ENCODE measurements at regions of chr1 and their contacts with region 1.

Region 1: GRCh38 chr1:31548907-31549808 is 27.2 kb upstream of the TINAGL1 start:
- DNase-seq: peak; percentile 71
- H3K4me3 ChIP-seq: peak overlapping the region; percentile 21
- CTCF ChIP-seq: peak; percentile 90

Region 2: GRCh38 chr1:31196685-31197084 is 352.5 kb before region 1 on chr1:
- in situ Hi-C with region 1: loop called (anchors 10 kb)
- DNase-seq: no peak
- H3K4me3 ChIP-seq: no peak overlapping the region
- CTCF ChIP-seq: no peak

Region 3: DNA sequence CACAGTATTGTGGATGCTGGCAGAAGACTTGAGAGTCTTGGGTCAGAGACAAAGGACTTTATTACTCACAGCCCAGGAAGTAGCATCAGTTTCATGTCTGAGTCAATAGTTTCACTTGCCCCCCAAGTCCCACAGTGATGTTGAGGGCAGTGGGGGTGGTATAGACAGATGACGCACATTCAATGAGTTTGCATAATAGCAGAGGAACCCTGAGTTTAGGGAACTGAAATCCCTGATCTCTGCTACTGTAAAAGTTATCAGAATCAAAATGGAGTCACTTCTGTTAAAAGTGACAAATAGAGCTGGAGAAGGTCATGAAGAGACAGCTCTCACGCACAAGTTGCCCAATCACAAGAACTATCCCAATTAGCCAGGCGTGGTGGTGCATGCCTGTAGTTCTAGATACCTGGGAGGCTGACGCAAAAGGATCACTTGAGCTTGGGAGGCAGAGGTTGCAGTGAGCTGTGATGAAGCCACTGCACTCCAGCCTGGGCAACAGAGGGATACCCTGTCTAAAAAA is 56.8 kb after region 1 on chr1:
- in situ Hi-C with region 1: no loop called
- DNase-seq: no peak
- H3K4me3 ChIP-seq: no peak overlapping the region
- CTCF ChIP-seq: no peak

Region 4: DNA sequence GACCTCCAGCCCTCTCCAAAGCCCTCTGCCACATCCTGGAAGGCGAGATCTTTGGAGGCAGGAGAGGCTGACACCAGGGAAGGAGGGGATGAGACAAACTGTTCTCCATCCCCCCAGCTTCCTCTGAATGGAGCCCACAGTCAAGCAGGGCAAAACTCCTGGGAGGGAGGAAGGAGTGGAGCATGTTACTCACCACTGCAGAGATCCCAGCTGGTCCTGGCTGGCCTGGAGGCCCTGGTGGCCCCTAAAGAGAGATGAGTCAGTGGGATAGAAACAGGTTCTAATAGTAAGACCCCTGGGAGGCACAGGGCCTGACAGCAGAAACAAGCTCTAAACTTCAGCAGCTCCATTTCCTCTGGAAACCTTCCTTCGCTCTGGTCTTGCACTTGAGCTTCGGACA is 109.6 kb after region 1 on chr1:
- in situ Hi-C with region 1: no loop called
- DNase-seq: no peak
- H3K4me3 ChIP-seq: no peak overlapping the region
- CTCF ChIP-seq: no peak

Measured in astrocyte of the cerebellum (primary cell).